ENCODE measurements at regions of chr5 and their contacts with region 1.

Region 1: GRCh38 chr5:158543539-158544387 is 556.0 kb downstream of the EBF1 start:
- DNase-seq: no peak
- H3K4me3 Mint-ChIP-seq: no peak overlapping the region
- H3K27ac Mint-ChIP-seq: no peak overlapping the region
- H3K4me1 Mint-ChIP-seq: peaks cover 4% of the 10 kb centered on the region
- H3K27me3 Mint-ChIP-seq: peaks cover 2% of the 10 kb centered on the region

Region 2: GRCh38 chr5:158513490-158514318 is 30.1 kb before region 1 on chr5:
- intact Hi-C with region 1: loop called (anchors 1 kb)
- DNase-seq: no peak
- H3K4me3 Mint-ChIP-seq: peak overlapping the region; percentile 27
- H3K27ac Mint-ChIP-seq: peak overlapping the region; percentile 73
- H3K4me1 Mint-ChIP-seq: peaks cover 33% of the 10 kb centered on the region
- H3K27me3 Mint-ChIP-seq: no peaks in the 10 kb centered on the region

Region 3: GRCh38 chr5:158725297-158725851 is 181.6 kb after region 1 on chr5:
- intact Hi-C with region 1: no loop called
- DNase-seq: no peak
- H3K4me3 Mint-ChIP-seq: no peak overlapping the region
- H3K27ac Mint-ChIP-seq: no peak overlapping the region
- H3K4me1 Mint-ChIP-seq: no peaks in the 10 kb centered on the region
- H3K27me3 Mint-ChIP-seq: peaks cover 9% of the 10 kb centered on the region

Measured in activated T-helper 1 cell treated with anti-CD3 and anti-CD28 coated beads, Interleukin-12 subunit alpha, Interleukin-12 subunit beta, Interleukin-2, Interleukin-4 antibody, amounts not matched to agents 30 ng/mL and 10 ng/mL and 1 ng/mL, durations not matched to agents 14 hours and 24 hours and 36 hours (primary cell).